Transverse colon (tissue), 4 donors: ENCODE measurements at regions of chr20 and their contacts with region 1.

Region 1: DNA sequence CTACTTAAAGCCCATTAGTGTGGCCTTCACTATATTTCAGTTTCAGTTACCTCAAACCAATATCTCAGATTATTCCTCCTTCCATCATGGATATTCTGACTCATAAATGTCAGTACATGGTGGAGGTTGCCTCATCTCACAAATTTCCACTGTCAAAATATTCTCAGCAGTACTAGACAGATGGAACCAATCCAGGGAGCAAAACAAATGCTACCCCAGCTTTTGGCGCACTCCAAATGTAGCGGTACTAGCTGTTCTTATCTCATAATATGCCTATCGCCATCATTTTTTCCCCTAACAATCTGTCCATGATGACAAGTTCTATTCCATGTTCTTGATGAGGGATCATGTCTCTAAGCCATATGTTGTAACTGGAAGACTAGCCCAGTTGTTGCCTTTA is 1026.1 kb downstream of the KIF16B start:
- DNase-seq: no peak
- H3K4me3 ChIP-seq: no peak overlapping the region
- H3K27ac ChIP-seq: no peak overlapping the region
- H3K4me1 ChIP-seq: no peaks in the 10 kb centered on the region
- H3K27me3 ChIP-seq: no peaks in the 10 kb centered on the region
- CTCF ChIP-seq: no peak
- EP300 ChIP-seq: no peak
- POLR2A ChIP-seq: no peak

Region 2: GRCh38 chr20:15396900-15397299 is 150.2 kb before region 1 on chr20:
- in situ Hi-C with region 1: no loop called
- intact Hi-C with region 1: no loop called
- DNase-seq: no peak
- H3K4me3 ChIP-seq: no peak overlapping the region
- H3K27ac ChIP-seq: no peak overlapping the region
- H3K4me1 ChIP-seq: no peaks in the 10 kb centered on the region
- H3K27me3 ChIP-seq: no peaks in the 10 kb centered on the region
- CTCF ChIP-seq: no peak
- EP300 ChIP-seq: no peak
- POLR2A ChIP-seq: no peak

Region 3: GRCh38 chr20:15593081-15593480 is 46.0 kb after region 1 on chr20:
- in situ Hi-C with region 1: no loop called
- intact Hi-C with region 1: loop called (anchors 2 kb)
- DNase-seq: no peak
- H3K4me3 ChIP-seq: no peak overlapping the region
- H3K27ac ChIP-seq: no peak overlapping the region
- H3K4me1 ChIP-seq: no peaks in the 10 kb centered on the region
- H3K27me3 ChIP-seq: no peaks in the 10 kb centered on the region
- CTCF ChIP-seq: no peak
- EP300 ChIP-seq: no peak
- POLR2A ChIP-seq: no peak

Region 4: GRCh38 chr20:15763366-15763765 is 216.2 kb after region 1 on chr20:
- in situ Hi-C with region 1: no loop called
- intact Hi-C with region 1: no loop called
- DNase-seq: no peak
- H3K4me3 ChIP-seq: no peak overlapping the region
- H3K27ac ChIP-seq: no peak overlapping the region
- H3K4me1 ChIP-seq: peaks cover 0 to 9% (median 6%) of the 10 kb centered on the region in 4 donors
- H3K27me3 ChIP-seq: no peaks in the 10 kb centered on the region
- CTCF ChIP-seq: no peak
- EP300 ChIP-seq: no peak
- POLR2A ChIP-seq: no peak